PC-9 (cell line): ENCODE measurements at regions of chr1 and their contacts with region 1.

Region 1: GRCh38 chr1:184691719-184692324 is 62.8 kb downstream of the EDEM3 start:
- DNase-seq: peak in 1 of 2 experiments; percentile 29
- H3K4me3 ChIP-seq: no peak overlapping the region
- H3K27ac ChIP-seq: no peak overlapping the region
- H3K4me1 ChIP-seq: no peaks in the 10 kb centered on the region
- H3K27me3 ChIP-seq: no peaks in the 10 kb centered on the region
- CTCF ChIP-seq: peak; percentile 81

Region 2: GRCh38 chr1:183635606-183636333 is 1056.1 kb before region 1 on chr1 and contains the start of gene ARPC5:
- CTCF ChIA-PET with region 1: no interaction called
- POLR2A ChIA-PET with region 1: no interaction called
- intact Hi-C with region 1: loop called (anchors 10 kb)
- DNase-seq: peak; percentile 89 to 96
- H3K4me3 ChIP-seq: peak within 1 kb of the TSS; percentile 98
- H3K27ac ChIP-seq: peak within 1 kb of the TSS; percentile 69
- H3K4me1 ChIP-seq: peaks cover 36% of the 10 kb centered on the region
- H3K27me3 ChIP-seq: no peaks in the 10 kb centered on the region
- CTCF ChIP-seq: no peak
- total RNA-seq, gene ARPC5: 143 and 150 TPM in 2 replicates

Region 3: GRCh38 chr1:183655562-183656075 is 1036.2 kb before region 1 on chr1:
- CTCF ChIA-PET with region 1: no interaction called
- POLR2A ChIA-PET with region 1: no interaction called
- intact Hi-C with region 1: loop called (anchors 5 kb)
- DNase-seq: peak; percentile 54 to 68
- H3K4me3 ChIP-seq: no peak overlapping the region
- H3K27ac ChIP-seq: no peak overlapping the region
- H3K4me1 ChIP-seq: no peaks in the 10 kb centered on the region
- H3K27me3 ChIP-seq: no peaks in the 10 kb centered on the region
- CTCF ChIP-seq: peak; percentile 94

Region 4: GRCh38 chr1:184075055-184076029 is 616.5 kb before region 1 on chr1:
- CTCF ChIA-PET with region 1: interaction called, 13 read pairs
- POLR2A ChIA-PET with region 1: no interaction called
- intact Hi-C with region 1: loop called (anchors 1 kb)
- DNase-seq: peak; percentile 15 to 43
- H3K4me3 ChIP-seq: no peak overlapping the region
- H3K27ac ChIP-seq: no peak overlapping the region
- H3K4me1 ChIP-seq: no peaks in the 10 kb centered on the region
- H3K27me3 ChIP-seq: no peaks in the 10 kb centered on the region
- CTCF ChIP-seq: peak; percentile 85